ENCODE measurements at regions of chr9 and their contacts with region 1.

Region 1: GRCh38 chr9:37485389-37486219 is at the start of gene POLR1E:
- DNase-seq: peak; percentile 96
- ATAC-seq: peak; percentile 99
- H3K4me3 ChIP-seq: peak within 1 kb of the TSS; percentile 27 to 93 (median 89)
- H3K4me3 Mint-ChIP-seq: peak within 1 kb of the TSS; percentile 94
- H3K27ac ChIP-seq: peak within 1 kb of the TSS; percentile 57 to 62
- H3K27ac Mint-ChIP-seq: peak within 1 kb of the TSS; percentile 95
- H3K4me1 ChIP-seq: peaks cover 24 to 26% of the 10 kb centered on the region in 2 donors
- H3K4me1 Mint-ChIP-seq: peaks cover 32% of the 10 kb centered on the region
- H3K27me3 ChIP-seq: peaks cover 0 to 4% (median 2%) of the 10 kb centered on the region in 4 experiments
- H3K27me3 Mint-ChIP-seq: peaks cover 6% of the 10 kb centered on the region
- CTCF ChIP-seq: no peak
- total RNA-seq, gene POLR1E: 30.3 and 31.0 TPM in 2 replicates

Region 2: GRCh38 chr9:37053684-37054362 is 431.8 kb before region 1 on chr9:
- CTCF ChIA-PET with region 1: no interaction called
- POLR2A ChIA-PET with region 1: no interaction called
- intact Hi-C with region 1: no loop called
- DNase-seq: no peak
- ATAC-seq: no peak
- H3K4me3 ChIP-seq: no peak overlapping the region
- H3K4me3 Mint-ChIP-seq: no peak overlapping the region
- H3K27ac ChIP-seq: no peak overlapping the region
- H3K27ac Mint-ChIP-seq: no peak overlapping the region
- H3K4me1 ChIP-seq: peaks cover 9 to 15% of the 10 kb centered on the region in 2 donors
- H3K4me1 Mint-ChIP-seq: peaks cover 15% of the 10 kb centered on the region
- H3K27me3 ChIP-seq: no peaks in the 10 kb centered on the region
- H3K27me3 Mint-ChIP-seq: no peaks in the 10 kb centered on the region
- CTCF ChIP-seq: no peak

Region 3: GRCh38 chr9:37422289-37423104 is 63.1 kb before region 1 on chr9 and contains the start of gene GRHPR:
- CTCF ChIA-PET with region 1: no interaction called
- POLR2A ChIA-PET with region 1: no interaction called
- intact Hi-C with region 1: loop called (anchors 1 kb)
- DNase-seq: peak; percentile 90
- ATAC-seq: peak; percentile 99
- H3K4me3 ChIP-seq: peak within 1 kb of the TSS; percentile 80 to 88 (median 82)
- H3K4me3 Mint-ChIP-seq: peak within 1 kb of the TSS; percentile 97
- H3K27ac ChIP-seq: peak within 1 kb of the TSS; percentile 68 to 80
- H3K27ac Mint-ChIP-seq: peak within 1 kb of the TSS; percentile 92
- H3K4me1 ChIP-seq: peaks cover 18 to 31% of the 10 kb centered on the region in 2 donors
- H3K4me1 Mint-ChIP-seq: peaks cover 28% of the 10 kb centered on the region
- H3K27me3 ChIP-seq: no peaks in the 10 kb centered on the region
- H3K27me3 Mint-ChIP-seq: no peaks in the 10 kb centered on the region
- CTCF ChIP-seq: no peak
- total RNA-seq, gene GRHPR: 121 and 122 TPM in 2 replicates

Region 4: GRCh38 chr9:37433867-37434371 is 51.7 kb before region 1 on chr9:
- CTCF ChIA-PET with region 1: no interaction called
- POLR2A ChIA-PET with region 1: no interaction called
- intact Hi-C with region 1: no loop called
- DNase-seq: no peak
- ATAC-seq: no peak
- H3K4me3 ChIP-seq: no peak overlapping the region
- H3K4me3 Mint-ChIP-seq: no peak overlapping the region
- H3K27ac ChIP-seq: no peak overlapping the region
- H3K27ac Mint-ChIP-seq: peak overlapping the region; percentile 41
- H3K4me1 ChIP-seq: peaks cover 16 to 26% of the 10 kb centered on the region in 2 donors
- H3K4me1 Mint-ChIP-seq: peaks cover 21% of the 10 kb centered on the region
- H3K27me3 ChIP-seq: no peaks in the 10 kb centered on the region
- H3K27me3 Mint-ChIP-seq: no peaks in the 10 kb centered on the region
- CTCF ChIP-seq: no peak

Region 5: DNA sequence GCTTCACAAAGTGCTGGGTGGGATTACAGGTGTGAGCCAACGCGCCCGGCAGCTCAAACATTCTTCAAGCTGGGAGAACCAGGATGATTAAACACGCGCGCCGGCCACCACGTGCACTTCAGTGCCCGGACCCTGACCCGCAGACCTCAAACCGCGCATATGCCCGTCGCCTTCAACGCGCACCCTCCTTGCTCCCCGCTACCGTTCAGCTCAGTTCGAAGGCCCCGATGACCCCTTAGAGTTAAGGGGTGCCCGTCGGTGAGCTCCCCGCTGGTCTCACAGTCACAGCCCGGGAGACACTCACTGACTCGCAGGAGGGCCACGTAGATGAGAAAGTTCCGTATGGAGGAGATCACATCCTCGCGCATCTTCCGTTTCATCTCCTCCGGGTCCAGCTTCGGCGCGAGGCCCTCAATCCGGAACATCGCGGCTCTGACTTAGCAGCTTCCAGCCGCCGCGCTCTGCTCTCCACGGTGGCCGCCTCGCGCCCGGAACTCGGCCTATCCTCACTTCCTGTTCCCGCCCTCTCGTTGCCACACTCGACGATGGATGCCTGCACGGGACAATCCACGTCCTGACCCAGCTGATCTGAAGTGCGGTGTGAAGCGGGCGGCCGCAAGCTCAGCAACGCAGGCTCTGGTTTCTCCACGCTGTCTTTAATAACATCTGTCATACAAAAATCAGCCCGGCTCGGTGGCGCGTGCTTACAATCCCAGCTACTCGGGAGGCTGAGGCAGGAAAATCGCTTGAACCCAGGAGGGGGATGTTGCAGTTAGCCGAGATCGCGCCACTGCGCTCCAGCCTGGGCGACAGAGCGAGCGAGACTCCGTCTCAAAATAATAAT is 106.7 kb after region 1 on chr9 and contains the start of gene TOMM5:
- CTCF ChIA-PET with region 1: interaction called, 9 read pairs
- POLR2A ChIA-PET with region 1: interaction called, 5 read pairs
- intact Hi-C with region 1: loop called (anchors 1 kb)
- DNase-seq: peak; percentile 93
- ATAC-seq: peak; percentile 96
- H3K4me3 ChIP-seq: peak within 1 kb of the TSS; percentile 87 to 100 (median 97)
- H3K4me3 Mint-ChIP-seq: peak within 1 kb of the TSS; percentile 99
- H3K27ac ChIP-seq: peak within 1 kb of the TSS; percentile 71 to 83
- H3K27ac Mint-ChIP-seq: peak within 1 kb of the TSS; percentile 96
- H3K4me1 ChIP-seq: peaks cover 23 to 36% of the 10 kb centered on the region in 2 donors
- H3K4me1 Mint-ChIP-seq: peaks cover 46% of the 10 kb centered on the region
- H3K27me3 ChIP-seq: peaks cover 0 to 5% (median 0%) of the 10 kb centered on the region in 4 experiments
- H3K27me3 Mint-ChIP-seq: peaks cover 4% of the 10 kb centered on the region
- CTCF ChIP-seq: no peak
- total RNA-seq, gene TOMM5: 39.7 and 44.4 TPM in 2 replicates

Region 6: DNA sequence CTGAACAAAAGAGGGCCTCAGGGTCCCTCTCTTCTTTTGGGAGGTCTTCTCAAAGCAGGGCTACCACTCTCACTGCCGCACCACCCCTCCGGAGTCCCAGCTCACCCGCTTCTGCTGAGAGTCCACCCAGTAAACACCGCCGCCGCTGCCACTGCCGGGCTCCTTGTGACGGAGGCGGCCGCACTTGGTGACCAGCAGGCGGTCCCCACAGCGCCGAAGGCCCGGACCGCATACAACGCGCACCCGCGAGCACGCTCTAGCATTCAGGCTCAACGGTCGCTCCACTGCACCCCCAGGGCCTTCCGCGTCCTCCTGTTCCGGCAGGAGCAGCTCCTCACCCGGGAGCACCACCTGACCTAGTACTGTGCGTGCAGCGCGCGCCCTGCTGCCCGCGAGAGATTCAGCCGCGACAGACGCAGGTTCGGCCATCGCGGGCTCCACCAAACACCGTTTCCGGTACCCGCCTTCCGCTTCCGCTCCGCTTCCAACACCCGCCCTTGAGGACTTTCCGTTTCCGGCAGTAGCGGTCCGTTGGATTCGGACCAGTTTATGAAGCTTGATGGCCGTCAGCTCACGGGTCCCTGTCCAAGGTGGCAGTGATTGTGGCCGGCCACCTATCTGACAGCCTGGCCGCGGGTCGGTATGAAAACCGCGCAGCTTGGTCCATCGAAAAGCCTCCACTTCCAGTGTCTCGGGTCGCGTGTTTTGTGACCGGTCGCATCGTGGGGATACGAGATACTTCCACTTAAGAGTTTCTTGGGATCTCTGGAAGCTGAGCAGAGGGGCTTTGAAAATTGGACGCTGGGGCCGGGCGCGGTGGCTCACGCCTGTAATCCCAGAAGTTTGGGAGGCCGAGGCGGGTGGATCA is 299.2 kb after region 1 on chr9 and contains the start of gene EXOSC3:
- CTCF ChIA-PET with region 1: no interaction called
- POLR2A ChIA-PET with region 1: no interaction called
- intact Hi-C with region 1: loop called (anchors 10 kb)
- DNase-seq: peak; percentile 91
- ATAC-seq: peak; percentile 86
- H3K4me3 ChIP-seq: peak within 1 kb of the TSS; percentile 75 to 96 (median 87)
- H3K4me3 Mint-ChIP-seq: peak within 1 kb of the TSS; percentile 98
- H3K27ac ChIP-seq: peak within 1 kb of the TSS; percentile 69 to 86
- H3K27ac Mint-ChIP-seq: peak within 1 kb of the TSS; percentile 95
- H3K4me1 ChIP-seq: peaks cover 16 to 21% of the 10 kb centered on the region in 2 donors
- H3K4me1 Mint-ChIP-seq: peaks cover 33% of the 10 kb centered on the region
- H3K27me3 ChIP-seq: peaks cover 0 to 2% (median 0%) of the 10 kb centered on the region in 4 experiments
- H3K27me3 Mint-ChIP-seq: peaks cover 9% of the 10 kb centered on the region
- CTCF ChIP-seq: peak; percentile 26
- total RNA-seq, gene EXOSC3: 55.3 and 64.9 TPM in 2 replicates

Region 7: GRCh38 chr9:37913480-37914153 is 428.0 kb after region 1 on chr9:
- CTCF ChIA-PET with region 1: interaction called, 7 read pairs
- POLR2A ChIA-PET with region 1: no interaction called
- intact Hi-C with region 1: loop called (anchors 1 kb)
- DNase-seq: peak; percentile 84
- ATAC-seq: peak; percentile 97
- H3K4me3 ChIP-seq: no peak overlapping the region
- H3K4me3 Mint-ChIP-seq: no peak overlapping the region
- H3K27ac ChIP-seq: no peak overlapping the region
- H3K27ac Mint-ChIP-seq: no peak overlapping the region
- H3K4me1 ChIP-seq: no peaks in the 10 kb centered on the region
- H3K4me1 Mint-ChIP-seq: no peaks in the 10 kb centered on the region
- H3K27me3 ChIP-seq: no peaks in the 10 kb centered on the region
- H3K27me3 Mint-ChIP-seq: no peaks in the 10 kb centered on the region
- CTCF ChIP-seq: peak; percentile 96